B cell (primary cell): ENCODE measurements at regions of chr2 and their contacts with region 1.

Region 1: GRCh38 chr2:12716282-12717190 is at the start of gene TRIB2:
- DNase-seq: peak; percentile 94
- ATAC-seq: peak; percentile 83
- H3K4me3 ChIP-seq: peak within 1 kb of the TSS; percentile 79 to 99 (median 93)
- H3K4me3 Mint-ChIP-seq: peak within 1 kb of the TSS; percentile 93
- H3K27ac ChIP-seq: peak within 1 kb of the TSS; percentile 79 to 89
- H3K27ac Mint-ChIP-seq: peak within 1 kb of the TSS; percentile 92
- H3K4me1 ChIP-seq: peaks cover 31 to 36% of the 10 kb centered on the region in 2 donors
- H3K4me1 Mint-ChIP-seq: peaks cover 47% of the 10 kb centered on the region
- H3K27me3 ChIP-seq: no peaks in the 10 kb centered on the region
- H3K27me3 Mint-ChIP-seq: no peaks in the 10 kb centered on the region
- CTCF ChIP-seq: peak; percentile 63
- total RNA-seq, gene TRIB2: 35.0 and 36.3 TPM in 2 replicates

Region 2: GRCh38 chr2:11344342-11344955 is 1372.1 kb before region 1 on chr2 and contains the start of gene ROCK2:
- CTCF ChIA-PET with region 1: no interaction called
- POLR2A ChIA-PET with region 1: no interaction called
- intact Hi-C with region 1: loop called (anchors 10 kb)
- DNase-seq: peak; percentile 83
- ATAC-seq: peak; percentile 69
- H3K4me3 ChIP-seq: peak within 1 kb of the TSS; percentile 56 to 91 (median 81)
- H3K4me3 Mint-ChIP-seq: peak within 1 kb of the TSS; percentile 99
- H3K27ac ChIP-seq: peak within 1 kb of the TSS; percentile 42 to 67
- H3K27ac Mint-ChIP-seq: peak within 1 kb of the TSS; percentile 97
- H3K4me1 ChIP-seq: peaks cover 16 to 19% of the 10 kb centered on the region in 2 donors
- H3K4me1 Mint-ChIP-seq: peaks cover 38% of the 10 kb centered on the region
- H3K27me3 ChIP-seq: no peaks in the 10 kb centered on the region
- H3K27me3 Mint-ChIP-seq: no peaks in the 10 kb centered on the region
- CTCF ChIP-seq: no peak
- total RNA-seq, gene ROCK2: 30.2 and 32.8 TPM in 2 replicates

Region 3: DNA sequence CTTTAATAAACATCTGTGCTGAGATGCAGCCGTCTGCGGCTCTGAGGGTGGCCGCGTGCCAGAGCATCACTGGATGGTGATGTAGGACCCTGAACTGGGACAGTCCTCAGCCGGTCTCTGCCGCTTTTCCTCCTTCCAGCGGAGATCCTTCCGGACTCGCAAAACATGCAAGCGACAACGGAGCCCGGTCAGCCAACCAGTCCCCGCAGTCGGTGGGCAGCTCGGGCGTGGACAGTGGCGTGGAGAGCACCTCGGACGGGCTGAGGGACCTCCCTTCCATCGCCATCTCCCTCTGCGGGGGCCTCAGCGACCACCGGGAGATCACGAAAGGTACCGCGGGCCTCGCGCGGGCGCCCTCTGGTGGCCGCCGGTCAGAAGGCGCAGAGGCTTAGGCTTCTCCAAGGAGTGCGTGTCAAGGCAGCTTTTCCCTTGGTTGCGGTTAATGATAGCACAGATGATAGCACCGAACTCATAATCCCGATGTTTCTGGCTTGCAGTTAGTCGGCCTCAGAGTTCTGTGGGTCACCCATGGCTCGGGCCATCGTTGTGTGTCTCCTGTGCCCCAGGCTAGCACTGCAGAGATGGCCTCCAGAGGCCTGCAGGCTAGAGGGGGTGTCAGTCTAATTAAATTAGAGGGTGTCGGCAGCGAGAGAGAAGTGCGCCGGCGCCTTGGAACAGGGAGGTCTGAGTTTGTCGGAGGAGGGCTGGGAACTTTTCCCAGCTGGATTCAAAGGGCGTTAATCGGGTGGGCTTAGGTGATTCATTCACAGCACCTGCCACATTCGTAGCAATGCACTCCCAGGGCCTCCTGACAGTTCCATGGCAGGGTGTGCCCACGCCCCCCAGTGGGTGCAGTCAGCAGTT is 931.6 kb before region 1 on chr2:
- CTCF ChIA-PET with region 1: interaction called, 11 read pairs
- POLR2A ChIA-PET with region 1: no interaction called
- intact Hi-C with region 1: no loop called
- DNase-seq: peak; percentile 63
- ATAC-seq: peak; percentile 41
- H3K4me3 ChIP-seq: no peak overlapping the region
- H3K4me3 Mint-ChIP-seq: no peak overlapping the region
- H3K27ac ChIP-seq: no peak overlapping the region
- H3K27ac Mint-ChIP-seq: no peak overlapping the region
- H3K4me1 ChIP-seq: no peaks in the 10 kb centered on the region
- H3K4me1 Mint-ChIP-seq: no peaks in the 10 kb centered on the region
- H3K27me3 ChIP-seq: no peaks in the 10 kb centered on the region
- H3K27me3 Mint-ChIP-seq: no peaks in the 10 kb centered on the region
- CTCF ChIP-seq: peak; percentile 98

Region 4: GRCh38 chr2:12270876-12271588 is 445.5 kb before region 1 on chr2:
- CTCF ChIA-PET with region 1: interaction called, 5 read pairs
- POLR2A ChIA-PET with region 1: no interaction called
- intact Hi-C with region 1: loop called (anchors 5 kb)
- DNase-seq: peak; percentile 23
- ATAC-seq: no peak
- H3K4me3 ChIP-seq: peak overlapping the region in 3 of 5 experiments; percentile 22 to 50 (median 23)
- H3K4me3 Mint-ChIP-seq: peak overlapping the region; percentile 67
- H3K27ac ChIP-seq: peak overlapping the region; percentile 2 to 25
- H3K27ac Mint-ChIP-seq: peak overlapping the region; percentile 27
- H3K4me1 ChIP-seq: peaks cover 11% of the 10 kb centered on the region in 2 donors
- H3K4me1 Mint-ChIP-seq: peaks cover 27% of the 10 kb centered on the region
- H3K27me3 ChIP-seq: no peaks in the 10 kb centered on the region
- H3K27me3 Mint-ChIP-seq: no peaks in the 10 kb centered on the region
- CTCF ChIP-seq: no peak

Region 5: DNA sequence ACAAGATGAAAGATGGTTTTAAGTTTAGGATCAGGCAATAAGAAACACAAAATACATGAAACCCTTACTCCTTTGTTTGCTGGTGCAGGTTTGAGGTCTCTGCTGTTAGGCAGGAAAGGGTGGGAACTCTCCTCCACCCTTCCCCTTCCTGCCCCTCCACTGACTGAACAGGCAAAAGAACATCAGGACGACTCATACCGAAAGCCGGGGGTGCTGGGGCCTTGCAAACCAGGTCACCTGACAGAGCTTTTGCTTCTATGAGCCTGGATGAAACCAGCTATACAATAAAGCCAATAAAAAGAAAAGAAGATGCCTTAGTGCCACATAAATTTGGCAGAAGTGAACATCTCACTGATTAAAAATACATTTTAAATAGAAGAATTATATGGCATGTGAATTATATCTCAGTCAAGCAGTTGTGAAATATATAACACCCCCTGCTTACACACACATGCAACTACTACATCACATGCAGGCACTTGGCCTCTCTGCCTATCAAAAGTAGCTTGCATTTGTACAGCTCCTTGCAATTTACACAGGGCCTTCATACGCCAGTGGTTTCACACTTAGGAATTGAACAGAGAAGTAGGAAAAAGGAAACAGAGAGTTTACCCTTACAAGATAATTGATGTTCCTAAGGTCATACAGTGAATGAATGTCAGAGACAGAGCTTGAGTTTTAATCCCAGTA is 214.9 kb before region 1 on chr2:
- CTCF ChIA-PET with region 1: interaction called, 9 read pairs
- POLR2A ChIA-PET with region 1: no interaction called
- intact Hi-C with region 1: loop called (anchors 5 kb)
- DNase-seq: peak; percentile 67
- ATAC-seq: peak; percentile 81
- H3K4me3 ChIP-seq: peak overlapping the region in 2 of 5 experiments; percentile 15 to 42
- H3K4me3 Mint-ChIP-seq: peak overlapping the region; percentile 74
- H3K27ac ChIP-seq: peak overlapping the region; percentile 43 to 57
- H3K27ac Mint-ChIP-seq: peak overlapping the region; percentile 81
- H3K4me1 ChIP-seq: peaks cover 55 to 62% of the 10 kb centered on the region in 2 donors
- H3K4me1 Mint-ChIP-seq: peaks cover 67% of the 10 kb centered on the region
- H3K27me3 ChIP-seq: peaks cover 0 to 8% (median 3%) of the 10 kb centered on the region in 4 experiments
- H3K27me3 Mint-ChIP-seq: peaks cover 11% of the 10 kb centered on the region
- CTCF ChIP-seq: no peak

Region 6: DNA sequence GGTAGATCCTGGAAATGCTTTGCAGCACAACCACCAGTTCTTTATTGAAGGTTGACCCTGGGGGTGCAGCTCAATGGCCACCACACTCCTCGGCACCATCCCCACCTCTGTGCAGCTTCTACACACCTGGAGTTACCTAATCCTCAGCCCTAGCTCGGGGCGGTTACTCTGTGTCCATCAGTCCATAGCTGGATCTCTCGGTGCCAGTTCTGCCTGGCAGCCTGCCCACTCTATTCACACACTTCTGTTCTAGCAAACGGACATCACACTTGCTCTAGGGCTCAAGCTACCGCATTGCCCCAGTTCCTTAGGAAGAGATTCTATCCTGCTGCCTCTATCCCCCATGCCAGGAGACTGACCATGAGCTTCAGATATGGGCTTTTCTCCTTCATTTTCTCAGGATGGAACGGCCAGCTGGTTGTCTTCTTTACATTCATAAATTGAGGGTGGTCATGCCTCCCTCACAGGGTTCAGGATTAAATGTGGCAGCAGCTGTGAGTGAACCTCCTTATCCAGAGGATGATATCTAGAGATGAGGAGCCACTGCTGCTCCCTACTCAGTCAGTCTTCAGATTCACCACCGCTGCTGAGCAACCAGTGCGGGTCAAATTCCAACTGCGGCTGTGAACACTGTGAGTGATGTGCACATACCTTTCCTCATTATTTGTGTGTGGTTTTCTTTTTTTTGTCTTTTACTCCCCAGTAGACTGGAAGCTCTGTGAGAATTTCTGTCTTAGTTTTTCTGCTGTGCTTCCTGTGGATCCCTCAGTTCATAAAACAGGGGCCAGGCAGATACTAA is 66.7 kb before region 1 on chr2:
- CTCF ChIA-PET with region 1: no interaction called
- POLR2A ChIA-PET with region 1: no interaction called
- intact Hi-C with region 1: no loop called
- DNase-seq: no peak
- ATAC-seq: no peak
- H3K4me3 ChIP-seq: no peak overlapping the region
- H3K4me3 Mint-ChIP-seq: no peak overlapping the region
- H3K27ac ChIP-seq: no peak overlapping the region
- H3K27ac Mint-ChIP-seq: no peak overlapping the region
- H3K4me1 ChIP-seq: no peaks in the 10 kb centered on the region
- H3K4me1 Mint-ChIP-seq: peaks cover 2% of the 10 kb centered on the region
- H3K27me3 ChIP-seq: peaks cover 0 to 20% (median 5%) of the 10 kb centered on the region in 4 experiments
- H3K27me3 Mint-ChIP-seq: peaks cover 29% of the 10 kb centered on the region
- CTCF ChIP-seq: no peak

Region 7: DNA sequence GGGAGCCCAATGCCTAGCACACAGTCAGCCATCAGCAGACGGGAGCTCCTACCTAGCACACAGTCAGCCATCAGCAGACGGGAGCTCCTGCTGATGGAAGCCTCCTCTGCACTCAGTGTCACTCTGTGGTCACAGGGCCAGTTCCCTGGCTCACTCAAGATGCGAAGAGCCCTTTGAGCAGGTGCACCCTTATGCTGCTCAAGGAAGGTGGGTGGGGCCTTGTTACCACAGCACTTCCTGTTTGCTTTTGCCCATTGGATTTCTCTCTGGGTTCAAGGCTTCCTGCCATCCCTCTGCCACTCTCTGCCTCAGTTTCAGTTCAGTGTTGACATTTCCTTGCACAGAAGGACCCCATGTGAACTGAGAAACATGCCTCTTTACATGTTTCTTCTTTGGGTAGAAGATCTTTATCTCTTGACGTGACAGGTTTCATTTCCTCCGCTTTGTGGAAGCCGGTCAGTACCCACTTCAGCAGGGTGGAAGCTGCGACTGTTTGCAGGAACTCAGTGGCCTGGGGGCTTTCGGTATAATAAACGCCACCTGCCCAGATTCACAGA is 11.8 kb after region 1 on chr2:
- CTCF ChIA-PET with region 1: interaction called, 27 read pairs
- POLR2A ChIA-PET with region 1: interaction called, 24 read pairs
- intact Hi-C with region 1: loop called (anchors 1 kb)
- DNase-seq: peak; percentile 82
- ATAC-seq: peak; percentile 82
- H3K4me3 ChIP-seq: peak overlapping the region in 4 of 5 experiments; percentile 1 to 39 (median 12)
- H3K4me3 Mint-ChIP-seq: peak overlapping the region; percentile 65
- H3K27ac ChIP-seq: peak overlapping the region; percentile 67 to 69
- H3K27ac Mint-ChIP-seq: peak overlapping the region; percentile 80
- H3K4me1 ChIP-seq: peaks cover 64 to 70% of the 10 kb centered on the region in 2 donors
- H3K4me1 Mint-ChIP-seq: peaks cover 81% of the 10 kb centered on the region
- H3K27me3 ChIP-seq: no peaks in the 10 kb centered on the region
- H3K27me3 Mint-ChIP-seq: no peaks in the 10 kb centered on the region
- CTCF ChIP-seq: no peak